Activated naive CD4-positive, alpha-beta T cell treated with anti-CD3 and anti-CD28 coated beads, Interleukin-2, amount 10 ng/mL, durations not matched to agents 7 days and 5 days (primary cell): ENCODE measurements at regions of chr14 and their contacts with region 1.

Region 1: GRCh38 chr14:24431569-24432258 is 2.0 kb downstream of the KHNYN start:
- DNase-seq: peak; percentile 95
- H3K4me3 Mint-ChIP-seq: peak overlapping the region; percentile 92
- H3K27ac Mint-ChIP-seq: peak overlapping the region; percentile 96
- H3K4me1 Mint-ChIP-seq: peaks cover 65% of the 10 kb centered on the region
- H3K27me3 Mint-ChIP-seq: no peaks in the 10 kb centered on the region

Region 2: GRCh38 chr14:24123508-24124417 is 308.0 kb before region 1 on chr14:
- CTCF ChIA-PET with region 1: no interaction called
- DNase-seq: peak; percentile 3
- H3K4me3 Mint-ChIP-seq: no peak overlapping the region
- H3K27ac Mint-ChIP-seq: no peak overlapping the region
- H3K4me1 Mint-ChIP-seq: no peaks in the 10 kb centered on the region
- H3K27me3 Mint-ChIP-seq: no peaks in the 10 kb centered on the region

Region 3: GRCh38 chr14:24299255-24300195 is 132.2 kb before region 1 on chr14 and contains the starts of genes DHRS1 and NOP9:
- CTCF ChIA-PET with region 1: interaction called, 12 read pairs
- DNase-seq: peak; percentile 94
- H3K4me3 Mint-ChIP-seq: peak within 1 kb of the TSS; percentile 93
- H3K27ac Mint-ChIP-seq: peak within 1 kb of the TSS; percentile 93
- H3K4me1 Mint-ChIP-seq: peaks cover 58% of the 10 kb centered on the region
- H3K27me3 Mint-ChIP-seq: peaks cover 5% of the 10 kb centered on the region

Region 4: GRCh38 chr14:24332268-24332993 is 99.3 kb before region 1 on chr14:
- CTCF ChIA-PET with region 1: interaction called, 557 read pairs
- DNase-seq: peak; percentile 92
- H3K4me3 Mint-ChIP-seq: peak overlapping the region; percentile 66
- H3K27ac Mint-ChIP-seq: peak overlapping the region; percentile 46
- H3K4me1 Mint-ChIP-seq: peaks cover 63% of the 10 kb centered on the region
- H3K27me3 Mint-ChIP-seq: peaks cover 79% of the 10 kb centered on the region

Region 5: GRCh38 chr14:24366721-24367513 is 64.8 kb before region 1 on chr14:
- CTCF ChIA-PET with region 1: interaction called, 38 read pairs
- DNase-seq: peak; percentile 27
- H3K4me3 Mint-ChIP-seq: peak overlapping the region; percentile 35
- H3K27ac Mint-ChIP-seq: no peak overlapping the region
- H3K4me1 Mint-ChIP-seq: peaks cover 30% of the 10 kb centered on the region
- H3K27me3 Mint-ChIP-seq: peaks cover 85% of the 10 kb centered on the region

Region 6: GRCh38 chr14:24411443-24412389 is 20.0 kb before region 1 on chr14:
- CTCF ChIA-PET with region 1: interaction called, 16 read pairs
- DNase-seq: peak; percentile 55
- H3K4me3 Mint-ChIP-seq: no peak overlapping the region
- H3K27ac Mint-ChIP-seq: no peak overlapping the region
- H3K4me1 Mint-ChIP-seq: no peaks in the 10 kb centered on the region
- H3K27me3 Mint-ChIP-seq: peaks cover 63% of the 10 kb centered on the region

Region 7: DNA sequence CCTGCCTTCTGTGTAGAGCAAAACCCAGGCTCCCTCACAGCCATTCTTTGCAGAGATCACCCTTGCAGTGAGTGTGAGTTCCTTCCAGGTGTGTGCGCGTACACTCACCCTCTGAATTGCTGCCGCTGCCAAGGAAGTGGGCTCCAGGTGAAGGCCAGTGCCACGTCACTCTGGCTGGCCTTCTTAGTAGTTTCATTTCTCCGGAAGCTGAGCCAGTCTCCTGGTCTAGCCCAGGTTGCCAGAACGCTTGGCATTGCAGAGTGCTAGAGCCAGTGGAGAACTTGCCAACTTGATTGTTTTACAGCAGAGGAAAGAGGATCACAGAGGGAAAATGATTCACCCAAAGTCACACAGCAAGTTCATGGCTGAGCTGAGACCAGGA is 13.2 kb before region 1 on chr14:
- CTCF ChIA-PET with region 1: interaction called, 15 read pairs
- DNase-seq: no peak
- H3K4me3 Mint-ChIP-seq: no peak overlapping the region
- H3K27ac Mint-ChIP-seq: no peak overlapping the region
- H3K4me1 Mint-ChIP-seq: no peaks in the 10 kb centered on the region
- H3K27me3 Mint-ChIP-seq: peaks cover 44% of the 10 kb centered on the region

Region 8: GRCh38 chr14:24442273-24443052 is 10.7 kb after region 1 on chr14 and contains the start of gene SDR39U1:
- CTCF ChIA-PET with region 1: interaction called, 35 read pairs
- DNase-seq: peak; percentile 98
- H3K4me3 Mint-ChIP-seq: peak within 1 kb of the TSS; percentile 97
- H3K27ac Mint-ChIP-seq: peak within 1 kb of the TSS; percentile 98
- H3K4me1 Mint-ChIP-seq: peaks cover 55% of the 10 kb centered on the region
- H3K27me3 Mint-ChIP-seq: no peaks in the 10 kb centered on the region

Region 9: GRCh38 chr14:24542346-24542936 is 110.7 kb after region 1 on chr14:
- CTCF ChIA-PET with region 1: no interaction called
- DNase-seq: no peak
- H3K4me3 Mint-ChIP-seq: no peak overlapping the region
- H3K27ac Mint-ChIP-seq: no peak overlapping the region
- H3K4me1 Mint-ChIP-seq: no peaks in the 10 kb centered on the region
- H3K27me3 Mint-ChIP-seq: no peaks in the 10 kb centered on the region